Caki2 (cell line): ENCODE measurements at regions of chr22 and their contacts with region 1.

Region 1: GRCh38 chr22:29917052-29917902 is 34.3 kb downstream of the MTMR3 start:
- DNase-seq: no peak

Region 2: DNA sequence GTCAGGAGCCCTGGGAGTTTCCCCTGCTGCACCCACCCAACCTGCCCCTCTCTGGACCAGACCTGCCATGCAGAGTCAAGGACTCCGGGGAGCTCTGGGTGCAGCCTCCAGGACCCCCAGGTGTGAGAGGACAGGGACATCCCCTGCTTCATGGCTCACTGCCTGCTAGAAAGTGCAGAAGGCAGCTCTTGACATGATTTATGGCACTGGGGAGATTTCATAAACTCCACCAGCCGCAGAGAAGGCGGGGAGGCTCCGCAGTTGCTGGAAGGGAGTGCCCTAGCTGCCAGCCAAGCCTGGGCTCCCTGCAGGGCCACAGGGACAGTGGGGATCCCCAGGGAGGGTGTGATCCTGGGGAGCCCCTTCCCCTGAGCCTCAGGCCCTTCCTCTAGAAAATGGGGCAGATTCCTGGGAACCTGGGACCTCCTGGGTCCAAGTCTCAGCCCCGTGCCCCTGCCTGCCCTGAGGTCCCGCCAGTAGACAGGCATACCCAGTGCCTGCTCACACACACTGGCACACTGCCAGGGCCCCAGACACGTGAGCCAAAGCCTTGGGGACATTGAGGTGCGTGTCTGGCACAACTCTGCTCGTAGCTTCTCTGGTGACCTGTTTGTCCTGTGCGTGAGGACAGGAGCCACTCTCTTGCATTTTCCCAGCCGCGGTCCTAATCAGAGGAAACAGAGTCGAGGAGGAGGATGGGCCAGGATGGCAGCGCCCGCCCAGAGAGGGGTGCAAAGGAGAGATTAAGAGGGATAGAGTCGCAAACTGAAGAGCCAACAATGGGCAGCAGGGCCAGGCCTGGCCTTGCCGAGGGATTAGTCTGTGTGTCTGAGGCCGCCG is 183.7 kb before region 1 on chr22:
- in situ Hi-C with region 1: no loop called
- DNase-seq: peak; percentile 73

Region 3: GRCh38 chr22:29979777-29980321 is 62.6 kb after region 1 on chr22:
- in situ Hi-C with region 1: loop called (anchors 5 kb)
- DNase-seq: no peak

Region 4: GRCh38 chr22:30195245-30196140 is 278.2 kb after region 1 on chr22:
- in situ Hi-C with region 1: no loop called
- DNase-seq: no peak